ENCODE measurements at regions of chr18 and their contacts with region 1.

Region 1: DNA sequence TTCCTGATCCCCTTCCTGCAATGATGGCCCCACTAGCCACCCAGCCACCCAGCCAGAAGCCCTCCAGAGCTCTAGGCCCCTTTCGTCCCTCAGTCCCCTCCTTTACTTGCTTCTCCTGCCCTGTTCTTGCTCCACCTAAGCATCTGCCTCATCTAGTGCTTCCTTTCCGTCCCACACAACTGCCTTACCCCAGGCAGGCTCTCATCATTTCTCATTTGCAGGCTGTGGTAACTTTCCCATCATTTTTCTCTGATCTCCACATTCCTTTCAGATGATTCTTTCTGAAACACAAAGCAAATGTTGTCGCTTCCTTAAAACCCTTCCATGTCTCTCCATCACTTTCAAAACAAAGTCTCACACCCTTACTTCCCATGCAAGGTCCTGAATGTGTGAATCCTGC is 459.8 kb downstream of the METTL4 start:
- DNase-seq: no peak
- ATAC-seq: no peak
- H3K4me3 ChIP-seq: no peak overlapping the region
- H3K27ac ChIP-seq: no peak overlapping the region
- H3K4me1 ChIP-seq: no peaks in the 10 kb centered on the region; a peak in 1 of 5 replicates
- H3K27me3 ChIP-seq: no peaks in the 10 kb centered on the region
- CTCF ChIP-seq: no peak
- EP300 ChIP-seq: no peak
- POLR2A ChIP-seq: no peak
- RAD21 ChIP-seq: no peak

Region 2: GRCh38 chr18:2150566-2150965 is 39.1 kb after region 1 on chr18:
- CTCF ChIA-PET with region 1: no interaction called
- POLR2A ChIA-PET with region 1: no interaction called
- in situ Hi-C with region 1: no loop called
- intact Hi-C with region 1: no loop called
- DNase-seq: no peak
- ATAC-seq: no peak
- H3K4me3 ChIP-seq: no peak overlapping the region
- H3K27ac ChIP-seq: no peak overlapping the region
- H3K4me1 ChIP-seq: no peaks in the 10 kb centered on the region
- H3K27me3 ChIP-seq: peaks cover 0 to 9% of the 10 kb centered on the region in 2 experiments; a peak in 2 of 5 replicates
- CTCF ChIP-seq: no peak
- EP300 ChIP-seq: no peak
- POLR2A ChIP-seq: no peak
- RAD21 ChIP-seq: no peak

Region 3: GRCh38 chr18:2536493-2536892 is 425.0 kb after region 1 on chr18:
- CTCF ChIA-PET with region 1: no interaction called
- POLR2A ChIA-PET with region 1: no interaction called
- in situ Hi-C with region 1: loop called (anchors 5 kb)
- intact Hi-C with region 1: no loop called
- DNase-seq: no peak
- ATAC-seq: no peak
- H3K4me3 ChIP-seq: no peak overlapping the region
- H3K27ac ChIP-seq: no peak overlapping the region
- H3K4me1 ChIP-seq: no peaks in the 10 kb centered on the region
- H3K27me3 ChIP-seq: no peaks in the 10 kb centered on the region
- CTCF ChIP-seq: no peak
- EP300 ChIP-seq: no peak
- POLR2A ChIP-seq: no peak
- RAD21 ChIP-seq: no peak